ENCODE measurements at regions of chr2 and their contacts with region 1.

Region 1: GRCh38 chr2:119366649-119367471 is at the starts of genes C2orf76 and DBI:
- DNase-seq: peak; percentile 93
- ATAC-seq: peak; percentile 92
- H3K4me3 Mint-ChIP-seq: peak within 1 kb of the TSS; percentile 100
- H3K27ac Mint-ChIP-seq: peak within 1 kb of the TSS; percentile 95
- H3K4me1 Mint-ChIP-seq: peaks cover 56% of the 10 kb centered on the region
- H3K27me3 Mint-ChIP-seq: no peaks in the 10 kb centered on the region
- CTCF ChIP-seq: no peak
- total RNA-seq, gene C2orf76: 10.0 and 11.0 TPM in 2 replicates
- total RNA-seq, gene DBI: 112 TPM in 2 replicates

Region 2: GRCh38 chr2:117814417-117815264 is 1552.2 kb before region 1 on chr2 and contains the start of gene DDX18:
- CTCF ChIA-PET with region 1: no interaction called
- POLR2A ChIA-PET with region 1: interaction called, 4 read pairs
- intact Hi-C with region 1: loop called (anchors 2 kb)
- DNase-seq: peak; percentile 92
- ATAC-seq: peak; percentile 88
- H3K4me3 Mint-ChIP-seq: peak within 1 kb of the TSS; percentile 97
- H3K27ac Mint-ChIP-seq: peak within 1 kb of the TSS; percentile 99
- H3K4me1 Mint-ChIP-seq: peaks cover 51% of the 10 kb centered on the region
- H3K27me3 Mint-ChIP-seq: no peaks in the 10 kb centered on the region
- CTCF ChIP-seq: peak; percentile 82
- total RNA-seq, gene DDX18: 98.9 and 109 TPM in 2 replicates

Region 3: GRCh38 chr2:118186110-118186857 is 1180.6 kb before region 1 on chr2:
- CTCF ChIA-PET with region 1: no interaction called
- POLR2A ChIA-PET with region 1: interaction called, 4 read pairs
- intact Hi-C with region 1: loop called (anchors 1 kb)
- DNase-seq: peak; percentile 81
- ATAC-seq: peak; percentile 95
- H3K4me3 Mint-ChIP-seq: peak overlapping the region; percentile 97
- H3K27ac Mint-ChIP-seq: peak overlapping the region; percentile 98
- H3K4me1 Mint-ChIP-seq: peaks cover 16% of the 10 kb centered on the region
- H3K27me3 Mint-ChIP-seq: peaks cover under 1% of the 10 kb centered on the region
- CTCF ChIP-seq: no peak

Region 4: DNA sequence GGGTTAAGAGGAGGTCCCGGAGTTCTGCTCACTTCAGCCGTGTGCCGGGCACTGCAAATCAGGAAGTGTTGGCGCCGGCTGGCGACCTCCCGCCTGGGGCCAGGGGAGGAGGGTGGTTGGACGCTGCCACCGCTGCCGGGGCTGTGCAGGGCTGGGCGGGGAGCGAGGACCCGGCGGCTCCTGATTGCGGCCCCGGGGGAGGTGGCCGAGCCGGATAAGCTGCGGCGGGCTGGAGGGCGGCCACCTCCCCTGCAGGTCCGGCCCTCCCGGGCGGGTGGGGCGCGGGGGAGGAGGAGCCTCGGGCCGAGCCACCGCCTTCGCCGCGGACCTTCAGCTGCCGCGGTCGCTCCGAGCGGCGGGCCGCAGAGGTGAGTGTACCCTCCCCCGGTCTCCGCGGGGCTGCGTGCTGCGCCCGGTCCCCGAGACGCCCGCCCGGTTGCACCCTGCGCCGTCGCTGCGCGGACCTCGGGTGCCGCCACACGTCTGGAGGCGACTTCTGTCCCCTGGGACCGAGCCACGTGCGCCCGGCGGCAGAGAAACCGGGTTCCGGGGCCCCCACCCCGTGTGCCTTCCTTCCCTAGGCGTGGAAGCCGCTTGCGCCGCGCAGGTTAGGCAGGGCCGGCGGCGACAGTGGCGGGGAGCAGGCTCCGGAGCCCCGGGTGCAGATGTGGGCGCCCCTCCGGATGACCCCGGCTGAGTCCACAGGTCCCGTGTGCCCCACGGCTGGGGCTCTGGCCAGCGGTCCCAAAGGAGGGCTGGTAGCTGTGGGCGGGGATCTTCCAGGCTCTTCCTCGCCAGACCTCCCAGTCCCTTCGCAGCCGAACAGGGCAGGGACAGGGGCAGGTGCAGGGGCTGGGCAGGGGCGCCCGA is 143.1 kb before region 1 on chr2 and contains the start of gene STEAP3:
- CTCF ChIA-PET with region 1: no interaction called
- POLR2A ChIA-PET with region 1: no interaction called
- intact Hi-C with region 1: loop called (anchors 5 kb)
- DNase-seq: peak; percentile 38
- ATAC-seq: peak; percentile 73
- H3K4me3 Mint-ChIP-seq: peak within 1 kb of the TSS; percentile 62
- H3K27ac Mint-ChIP-seq: no peak within 1 kb of the TSS
- H3K4me1 Mint-ChIP-seq: peaks cover 4% of the 10 kb centered on the region
- H3K27me3 Mint-ChIP-seq: peaks cover 20% of the 10 kb centered on the region
- CTCF ChIP-seq: no peak
- total RNA-seq, gene STEAP3: 1.1 and 1.2 TPM in 2 replicates

Region 5: DNA sequence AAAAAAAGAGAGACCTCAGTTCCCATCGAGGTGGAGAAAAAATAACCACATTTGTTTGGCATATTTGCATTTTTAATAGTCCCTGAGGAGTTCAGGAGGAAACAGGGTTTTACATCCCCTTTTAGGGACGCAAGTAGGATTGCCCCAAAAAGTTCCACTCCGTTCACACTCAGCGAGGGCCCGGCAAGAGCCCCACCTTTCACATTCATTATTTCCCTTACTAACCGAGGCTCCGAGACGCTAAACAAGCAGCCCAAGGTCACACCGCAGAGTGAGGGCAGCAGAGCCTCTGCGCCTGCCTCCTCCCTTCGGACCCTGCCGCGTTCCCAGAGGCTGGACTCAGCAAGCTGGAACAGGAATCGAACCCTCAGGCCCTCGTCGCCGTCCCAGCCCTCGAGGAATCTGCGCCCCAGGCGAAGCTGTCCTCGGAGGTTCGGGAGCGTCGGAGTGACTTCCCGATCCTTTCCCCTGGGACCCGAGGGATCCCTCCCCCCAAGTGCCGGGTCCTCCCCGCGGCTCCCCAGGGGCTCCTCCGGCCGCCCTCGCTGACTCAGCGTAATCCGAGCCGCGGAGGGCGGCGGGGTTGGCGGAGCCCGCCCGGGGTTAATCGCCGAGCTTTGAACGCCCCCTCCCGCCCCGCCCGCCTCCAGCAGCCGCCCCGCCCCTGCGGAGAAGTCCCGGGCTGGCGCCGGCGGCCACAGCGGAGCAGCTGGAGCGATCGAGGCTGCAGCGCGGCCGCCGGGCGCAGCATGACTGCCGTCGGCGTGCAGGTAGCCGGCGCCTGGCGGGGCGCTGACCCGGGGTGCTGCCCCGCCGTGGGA is 64.5 kb after region 1 on chr2 and contains the start of gene TMEM37:
- CTCF ChIA-PET with region 1: no interaction called
- POLR2A ChIA-PET with region 1: interaction called, 7 read pairs
- intact Hi-C with region 1: loop called (anchors 1 kb)
- DNase-seq: peak; percentile 55
- ATAC-seq: peak; percentile 79
- H3K4me3 Mint-ChIP-seq: peak within 1 kb of the TSS; percentile 77
- H3K27ac Mint-ChIP-seq: peak within 1 kb of the TSS; percentile 42
- H3K4me1 Mint-ChIP-seq: peaks cover 19% of the 10 kb centered on the region
- H3K27me3 Mint-ChIP-seq: peaks cover 47% of the 10 kb centered on the region
- CTCF ChIP-seq: no peak
- total RNA-seq, gene TMEM37: 0.37 and 0.51 TPM in 2 replicates

Region 6: GRCh38 chr2:120012771-120013596 is 646.1 kb after region 1 on chr2 and contains the start of gene EPB41L5:
- CTCF ChIA-PET with region 1: no interaction called
- POLR2A ChIA-PET with region 1: interaction called, 5 read pairs
- intact Hi-C with region 1: loop called (anchors 2 kb)
- DNase-seq: peak; percentile 77
- ATAC-seq: peak; percentile 87
- H3K4me3 Mint-ChIP-seq: peak within 1 kb of the TSS; percentile 87
- H3K27ac Mint-ChIP-seq: peak within 1 kb of the TSS; percentile 79
- H3K4me1 Mint-ChIP-seq: peaks cover 32% of the 10 kb centered on the region
- H3K27me3 Mint-ChIP-seq: no peaks in the 10 kb centered on the region
- CTCF ChIP-seq: no peak
- total RNA-seq, gene EPB41L5: 20.9 and 29.4 TPM in 2 replicates

Region 7: GRCh38 chr2:120343433-120344105 is 976.7 kb after region 1 on chr2:
- CTCF ChIA-PET with region 1: no interaction called
- POLR2A ChIA-PET with region 1: no interaction called
- intact Hi-C with region 1: loop called (anchors 10 kb)
- DNase-seq: peak; percentile 27
- ATAC-seq: peak; percentile 52
- H3K4me3 Mint-ChIP-seq: peak overlapping the region; percentile 55
- H3K27ac Mint-ChIP-seq: no peak overlapping the region
- H3K4me1 Mint-ChIP-seq: peaks cover 28% of the 10 kb centered on the region
- H3K27me3 Mint-ChIP-seq: peaks cover 58% of the 10 kb centered on the region
- CTCF ChIP-seq: no peak

Measured in activated B cell treated with CpG ODN at 0.5 μM for 24 hours (primary cell).